Right lobe of liver (tissue), 6 donors: ENCODE measurements at regions of chr5 and their contacts with region 1.

Region 1: GRCh38 chr5:172106511-172107356 is 81.3 kb downstream of the STK10 start:
- DNase-seq: peak in 2 of 3 donors; percentile 56 to 63
- ATAC-seq: peak; percentile 29 to 71 (median 54)
- H3K4me3 ChIP-seq: peak overlapping the region in 1 of 3 donors; percentile 30
- H3K27ac ChIP-seq: no peak overlapping the region
- H3K4me1 ChIP-seq: peaks cover 0 to 11% (median 0%) of the 10 kb centered on the region in 4 donors
- H3K27me3 ChIP-seq: no peaks in the 10 kb centered on the region
- CTCF ChIP-seq: peak; percentile 81 to 89 (median 85)
- POLR2A ChIP-seq: no peak

Region 2: DNA sequence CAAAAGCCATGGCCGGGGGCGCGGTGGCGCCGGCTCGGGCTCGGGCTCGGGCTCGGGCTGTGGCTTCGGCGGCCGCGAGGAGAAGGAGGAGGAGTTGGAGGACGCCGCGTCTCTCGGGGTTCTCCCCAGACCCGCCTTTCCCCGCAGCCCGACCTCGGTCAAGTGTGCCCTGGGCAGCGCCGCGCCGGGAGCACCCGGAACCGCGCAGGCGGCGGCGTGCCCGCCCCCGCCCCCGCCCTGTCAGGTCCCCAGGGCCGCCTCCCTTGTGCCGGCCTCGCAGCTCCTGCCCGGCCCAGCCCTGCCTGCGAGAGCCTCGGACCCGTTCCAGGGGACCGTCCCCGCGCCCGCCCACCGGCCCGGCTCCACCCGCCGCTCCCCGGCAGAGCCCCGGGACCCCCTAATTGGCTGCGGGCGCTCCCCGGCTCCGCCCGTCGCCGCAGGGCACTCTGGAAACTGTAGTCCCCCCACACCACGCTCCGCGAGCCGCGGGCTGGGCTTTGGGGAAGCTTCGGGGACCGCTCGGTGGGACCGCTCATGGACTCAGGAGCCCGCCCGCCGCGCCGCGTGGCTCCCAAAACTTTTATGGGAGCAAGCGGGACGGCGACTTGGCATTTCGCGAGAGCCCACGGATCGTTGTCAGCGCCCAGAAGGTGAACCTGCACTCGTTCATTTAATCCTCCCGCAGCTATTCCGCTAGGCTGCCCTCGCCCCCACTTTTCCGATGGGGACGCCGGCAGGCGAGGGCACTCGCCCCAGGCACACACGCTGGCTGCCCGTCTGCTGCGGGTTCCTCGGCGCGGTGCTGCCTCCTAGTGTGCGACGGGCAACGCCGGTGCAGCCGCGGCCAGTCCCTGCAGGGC is 81.5 kb after region 1 on chr5 and contains the start of gene STK10:
- intact Hi-C with region 1: loop called in 1 of 2 experiments (anchors 2 kb)
- DNase-seq: peak; percentile 97
- ATAC-seq: peak; percentile 91 to 96 (median 92)
- H3K4me3 ChIP-seq: peak within 1 kb of the TSS; percentile 55 to 87 (median 87)
- H3K27ac ChIP-seq: peak within 1 kb of the TSS; percentile 60 to 82 (median 73)
- H3K4me1 ChIP-seq: no peaks in the 10 kb centered on the region
- H3K27me3 ChIP-seq: no peaks in the 10 kb centered on the region
- CTCF ChIP-seq: peak; percentile 88 to 95 (median 90)
- POLR2A ChIP-seq: peak; percentile 85
- total RNA-seq, gene STK10: 6.9 to 27.4 (median 9.0) TPM

Region 3: DNA sequence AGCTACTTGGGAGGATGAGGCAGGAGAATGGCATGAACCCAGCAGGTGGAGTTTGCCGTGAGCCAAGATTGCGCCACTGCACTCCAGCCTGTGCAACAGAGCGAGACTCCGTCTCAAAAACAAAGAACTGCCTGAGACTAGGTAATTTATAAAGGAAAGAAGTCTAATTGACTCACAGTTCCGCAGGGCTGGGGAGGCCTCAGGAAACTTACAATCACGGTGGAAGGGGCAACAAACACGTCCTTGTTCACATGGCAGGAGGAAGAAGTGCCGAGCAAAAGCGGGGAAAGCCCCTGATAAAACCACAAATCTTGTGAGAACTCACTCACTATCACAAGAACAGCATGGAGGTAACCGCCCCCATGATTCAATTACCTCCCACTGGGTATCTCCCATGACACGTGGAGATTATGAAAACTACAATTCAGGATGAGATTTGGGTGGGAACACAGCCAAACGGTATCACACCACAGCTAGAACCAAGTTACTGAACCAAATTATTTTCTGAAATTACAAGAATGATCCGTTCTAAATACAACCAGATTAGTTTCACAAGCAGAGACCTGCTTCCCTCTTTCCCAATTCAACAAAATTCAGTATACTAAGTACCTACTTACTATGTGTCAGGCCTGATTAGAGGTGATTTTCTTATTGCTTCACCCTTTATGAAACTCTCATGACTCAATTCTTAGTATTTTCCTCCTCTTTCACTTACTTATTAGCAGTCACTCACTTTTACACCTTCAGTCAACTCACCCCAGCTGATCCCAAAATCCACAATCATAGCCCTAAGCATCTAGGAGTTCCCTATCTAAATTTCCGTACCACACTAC is 168.4 kb after region 1 on chr5:
- intact Hi-C with region 1: loop called in 1 of 2 experiments (anchors 10 kb)
- DNase-seq: no peak
- ATAC-seq: no peak
- H3K4me3 ChIP-seq: no peak overlapping the region
- H3K27ac ChIP-seq: no peak overlapping the region
- H3K4me1 ChIP-seq: peaks cover 0 to 3% (median 0%) of the 10 kb centered on the region in 4 donors
- H3K27me3 ChIP-seq: no peaks in the 10 kb centered on the region
- CTCF ChIP-seq: no peak
- POLR2A ChIP-seq: no peak

Region 4: GRCh38 chr5:172299916-172300439 is 193.2 kb after region 1 on chr5:
- intact Hi-C with region 1: loop called in 1 of 2 experiments (anchors 5 kb)
- DNase-seq: no peak
- ATAC-seq: no peak
- H3K4me3 ChIP-seq: no peak overlapping the region
- H3K27ac ChIP-seq: no peak overlapping the region
- H3K4me1 ChIP-seq: peaks cover 0 to 8% (median 0%) of the 10 kb centered on the region in 4 donors
- H3K27me3 ChIP-seq: no peaks in the 10 kb centered on the region
- CTCF ChIP-seq: no peak
- POLR2A ChIP-seq: no peak